CD4-positive, alpha-beta memory T cell (primary cell): ENCODE measurements at regions of chr19 and their contacts with region 1.

Region 1: DNA sequence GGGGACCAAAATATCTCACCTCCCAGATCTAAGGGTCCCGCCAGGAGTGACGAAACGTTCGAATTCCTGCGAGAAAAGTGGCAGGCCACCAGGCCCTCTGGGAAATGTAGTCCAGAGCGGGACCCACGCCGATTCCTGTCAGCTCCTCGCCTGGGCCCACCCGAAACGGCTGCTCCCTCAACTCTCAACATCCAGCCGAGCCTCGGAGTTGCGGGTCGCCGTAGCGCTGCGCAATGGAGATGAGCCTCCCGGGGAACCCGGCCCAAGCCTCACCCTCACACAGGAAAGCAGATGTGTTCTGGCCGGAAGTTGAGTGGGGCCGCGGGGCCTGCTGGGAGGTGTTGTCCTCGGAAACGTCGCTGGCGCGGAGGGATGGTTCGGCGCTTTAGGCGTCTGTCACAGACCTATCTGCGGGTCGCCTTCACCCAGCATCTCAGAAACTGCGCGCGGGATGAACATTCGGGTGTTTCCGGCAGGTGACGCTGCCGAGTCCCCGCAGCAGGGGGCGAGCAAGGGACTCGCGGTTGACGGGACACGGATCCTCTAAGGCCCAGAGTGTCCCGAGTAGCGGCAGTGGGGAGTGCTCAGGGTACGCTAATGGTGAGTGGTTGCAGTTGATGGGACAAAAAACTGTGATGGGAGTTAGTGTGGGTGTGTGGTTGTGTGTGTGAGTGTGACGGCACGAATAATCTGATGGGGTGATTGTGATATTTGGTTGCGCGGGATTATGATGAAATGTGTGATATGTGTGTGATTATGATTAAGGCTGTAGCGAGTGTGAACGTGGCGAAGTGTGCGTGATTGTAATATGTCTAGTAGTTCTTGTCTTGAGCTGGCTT is at the starts of genes ZNF568 and ZNF829:
- DNase-seq: peak; percentile 92 to 98 (median 95)
- H3K4me3 ChIP-seq: peak within 1 kb of the TSS; percentile 60 to 88
- H3K4me3 Mint-ChIP-seq: peak within 1 kb of the TSS; percentile 84 to 97 (median 94)
- H3K27ac ChIP-seq: peak within 1 kb of the TSS; percentile 93
- H3K27ac Mint-ChIP-seq: peak within 1 kb of the TSS; percentile 81 to 97 (median 96)
- H3K4me1 ChIP-seq: peaks cover 14% of the 10 kb centered on the region
- H3K4me1 Mint-ChIP-seq: peaks cover 19 to 39% (median 28%) of the 10 kb centered on the region in 4 donors
- H3K27me3 ChIP-seq: no peaks in the 10 kb centered on the region
- H3K27me3 Mint-ChIP-seq: no peaks in the 10 kb centered on the region
- total RNA-seq, gene ZNF568: 18.8 to 20.3 TPM
- total RNA-seq, gene ZNF829: 8.5 to 9.8 TPM

Region 2: GRCh38 chr19:36489118-36489919 is 426.9 kb before region 1 on chr19 and contains the start of gene ZNF566:
- CTCF ChIA-PET with region 1: no interaction called
- POLR2A ChIA-PET with region 1: interaction called, 3 read pairs
- intact Hi-C with region 1: loop called (anchors 1 kb)
- DNase-seq: peak; percentile 94 to 98 (median 96)
- H3K4me3 ChIP-seq: peak within 1 kb of the TSS; percentile 92 to 99
- H3K4me3 Mint-ChIP-seq: peak within 1 kb of the TSS; percentile 97 to 100 (median 98)
- H3K27ac ChIP-seq: peak within 1 kb of the TSS; percentile 93
- H3K27ac Mint-ChIP-seq: peak within 1 kb of the TSS; percentile 98 to 99 (median 98)
- H3K4me1 ChIP-seq: peaks cover 24% of the 10 kb centered on the region
- H3K4me1 Mint-ChIP-seq: peaks cover 22 to 36% (median 28%) of the 10 kb centered on the region in 4 donors
- H3K27me3 ChIP-seq: no peaks in the 10 kb centered on the region
- H3K27me3 Mint-ChIP-seq: no peaks in the 10 kb centered on the region
- total RNA-seq, gene ZNF566: 25.9 to 30.6 TPM

Region 3: GRCh38 chr19:36665832-36666231 is 250.4 kb before region 1 on chr19:
- CTCF ChIA-PET with region 1: no interaction called
- POLR2A ChIA-PET with region 1: no interaction called
- intact Hi-C with region 1: loop called (anchors 2 kb)
- DNase-seq: no peak
- H3K4me3 ChIP-seq: peak overlapping the region; percentile 76 to 100
- H3K4me3 Mint-ChIP-seq: peak overlapping the region; percentile 94 to 100 (median 99)
- H3K27ac ChIP-seq: peak overlapping the region; percentile 71
- H3K27ac Mint-ChIP-seq: peak overlapping the region in 6 of 7 donors; percentile 5 to 99 (median 94)
- H3K4me1 ChIP-seq: peaks cover 28% of the 10 kb centered on the region
- H3K4me1 Mint-ChIP-seq: peaks cover 24 to 45% (median 31%) of the 10 kb centered on the region in 4 donors
- H3K27me3 ChIP-seq: no peaks in the 10 kb centered on the region
- H3K27me3 Mint-ChIP-seq: no peaks in the 10 kb centered on the region

Region 4: GRCh38 chr19:36796076-36796992 is 119.9 kb before region 1 on chr19:
- CTCF ChIA-PET with region 1: no interaction called
- POLR2A ChIA-PET with region 1: no interaction called
- intact Hi-C with region 1: loop called (anchors 1 kb)
- DNase-seq: no peak
- H3K4me3 ChIP-seq: peak overlapping the region; percentile 94 to 96
- H3K4me3 Mint-ChIP-seq: peak overlapping the region; percentile 99 to 100 (median 99)
- H3K27ac ChIP-seq: peak overlapping the region; percentile 79
- H3K27ac Mint-ChIP-seq: peak overlapping the region; percentile 99 to 100 (median 100)
- H3K4me1 ChIP-seq: peaks cover 4% of the 10 kb centered on the region
- H3K4me1 Mint-ChIP-seq: peaks cover 5 to 35% (median 21%) of the 10 kb centered on the region in 4 donors
- H3K27me3 ChIP-seq: no peaks in the 10 kb centered on the region
- H3K27me3 Mint-ChIP-seq: peaks cover 0 to 6% of the 10 kb centered on the region in 2 donors

Region 5: DNA sequence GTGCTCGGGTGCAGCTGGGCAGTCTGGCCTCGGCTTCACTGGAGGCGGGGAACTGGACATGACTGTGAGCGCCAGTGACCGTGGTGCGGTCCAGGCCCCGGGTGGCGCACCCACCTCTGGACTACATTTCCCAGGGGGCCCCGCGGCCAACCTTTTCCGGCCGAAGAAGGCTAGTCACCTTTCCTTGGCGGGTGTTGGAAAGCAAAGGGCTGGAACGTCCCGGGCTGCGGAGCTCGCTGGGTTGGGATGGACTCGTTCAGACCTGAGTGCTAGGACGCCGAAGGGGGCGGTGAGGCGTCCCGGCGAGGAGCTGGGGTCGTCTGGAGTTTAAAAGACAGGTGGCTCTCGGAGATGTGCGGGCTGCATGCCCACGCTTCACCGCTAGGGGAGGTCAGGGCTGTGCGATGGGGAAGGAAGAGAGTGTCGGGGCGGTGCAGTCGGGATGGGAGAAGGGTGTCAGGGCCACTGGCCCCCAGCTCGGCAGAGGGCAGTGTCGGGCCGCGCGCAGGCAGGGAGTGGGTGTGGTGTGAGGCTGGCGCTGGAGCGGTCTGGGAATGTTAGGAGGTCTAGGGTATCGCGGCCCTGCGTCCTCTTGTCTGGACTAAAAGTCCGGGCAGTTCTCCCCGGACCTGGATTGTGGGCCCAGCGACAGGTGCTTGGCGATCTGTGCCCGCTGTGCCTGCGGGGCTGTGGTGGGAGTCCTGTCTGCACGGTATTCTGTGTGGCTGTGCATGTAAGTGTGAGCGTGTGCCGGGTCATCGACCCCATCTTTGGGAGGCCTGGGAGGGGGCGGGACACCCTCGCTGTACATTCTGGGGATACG is 57.0 kb after region 1 on chr19:
- CTCF ChIA-PET with region 1: interaction called, 3 read pairs
- POLR2A ChIA-PET with region 1: no interaction called
- intact Hi-C with region 1: loop called (anchors 1 kb)
- DNase-seq: peak; percentile 76 to 85 (median 77)
- H3K4me3 ChIP-seq: peak overlapping the region; percentile 80 to 86
- H3K4me3 Mint-ChIP-seq: peak overlapping the region; percentile 91 to 98 (median 96)
- H3K27ac ChIP-seq: peak overlapping the region; percentile 68
- H3K27ac Mint-ChIP-seq: peak overlapping the region; percentile 82 to 97 (median 94)
- H3K4me1 ChIP-seq: peaks cover 16% of the 10 kb centered on the region
- H3K4me1 Mint-ChIP-seq: peaks cover 8 to 22% (median 12%) of the 10 kb centered on the region in 4 donors
- H3K27me3 ChIP-seq: no peaks in the 10 kb centered on the region
- H3K27me3 Mint-ChIP-seq: no peaks in the 10 kb centered on the region

Region 6: GRCh38 chr19:37127999-37128820 is 212.0 kb after region 1 on chr19:
- CTCF ChIA-PET with region 1: no interaction called
- POLR2A ChIA-PET with region 1: no interaction called
- intact Hi-C with region 1: no loop called
- DNase-seq: no peak
- H3K4me3 ChIP-seq: peak overlapping the region; percentile 1 to 25
- H3K4me3 Mint-ChIP-seq: no peak overlapping the region
- H3K27ac ChIP-seq: no peak overlapping the region
- H3K27ac Mint-ChIP-seq: no peak overlapping the region
- H3K4me1 ChIP-seq: no peaks in the 10 kb centered on the region
- H3K4me1 Mint-ChIP-seq: peaks cover 0 to 2% (median 0%) of the 10 kb centered on the region in 4 donors
- H3K27me3 ChIP-seq: no peaks in the 10 kb centered on the region
- H3K27me3 Mint-ChIP-seq: no peaks in the 10 kb centered on the region